ENCODE measurements at regions of chr1 and their contacts with region 1.

Region 1: GRCh38 chr1:168945870-168946269 is 160.6 kb upstream of the ATP1B1 start:
- DNase-seq: peak; percentile 5
- ATAC-seq: peak; percentile 66; the same call in 2 of the 3 replicates
- H3K4me3 ChIP-seq: no peak overlapping the region
- H3K27ac ChIP-seq: no peak overlapping the region
- H3K4me1 ChIP-seq: no peaks in the 10 kb centered on the region
- H3K27me3 ChIP-seq: no peaks in the 10 kb centered on the region; a peak in 1 of 5 replicates
- CTCF ChIP-seq: no peak
- EP300 ChIP-seq: no peak
- POLR2A ChIP-seq: no peak
- RAD21 ChIP-seq: no peak

Region 2: DNA sequence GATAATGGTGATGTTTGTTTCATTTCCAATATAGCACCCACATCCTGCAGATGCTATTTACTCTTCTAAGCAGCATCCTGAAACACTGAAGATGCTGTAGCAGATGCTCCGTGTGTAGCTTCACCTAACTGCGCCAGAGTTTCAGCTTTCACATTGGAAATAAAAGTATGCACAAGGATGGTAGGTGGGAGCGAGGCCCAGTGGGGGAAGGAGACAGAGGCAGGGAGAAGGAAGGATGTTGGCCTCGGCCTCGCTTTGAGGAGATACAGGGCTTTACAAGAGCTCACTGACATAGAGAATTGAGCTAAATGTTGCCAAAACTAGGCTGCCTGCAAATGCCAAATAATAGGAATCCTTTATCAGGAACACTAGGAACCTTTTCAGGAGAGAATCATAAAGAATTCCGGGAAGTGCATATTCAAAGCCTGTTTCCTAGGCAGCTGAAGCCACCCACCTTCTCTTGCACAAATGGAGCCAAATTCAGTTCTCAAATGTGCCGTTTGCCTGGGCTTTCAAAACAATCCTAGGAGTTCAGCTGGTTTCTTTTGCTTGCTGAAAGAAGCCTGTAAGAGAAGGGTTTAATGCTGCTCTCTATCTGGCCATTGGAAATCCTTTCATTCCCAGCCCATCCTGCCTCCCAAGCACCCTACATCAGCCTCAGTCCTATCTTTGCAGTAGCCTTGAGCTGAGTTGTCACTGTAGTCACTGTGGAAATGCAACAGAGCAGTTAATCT is 25.2 kb after region 1 on chr1:
- CTCF ChIA-PET with region 1: no interaction called
- POLR2A ChIA-PET with region 1: no interaction called
- in situ Hi-C with region 1: no loop called
- intact Hi-C with region 1: loop called (anchors 1 kb)
- DNase-seq: no peak
- ATAC-seq: no peak
- H3K4me3 ChIP-seq: no peak overlapping the region
- H3K27ac ChIP-seq: no peak overlapping the region
- H3K4me1 ChIP-seq: no peaks in the 10 kb centered on the region
- H3K27me3 ChIP-seq: no peaks in the 10 kb centered on the region; a peak in 1 of 5 replicates
- CTCF ChIP-seq: no peak
- EP300 ChIP-seq: no peak
- POLR2A ChIP-seq: no peak
- RAD21 ChIP-seq: no peak